Activated T-helper 1 cell treated with anti-CD3 and anti-CD28 coated beads, Interleukin-12 subunit alpha, Interleukin-12 subunit beta, Interleukin-2, Interleukin-4 antibody, amounts not matched to agents 30 ng/mL and 10 ng/mL and 1 ng/mL, durations not matched to agents 14 hours and 24 hours and 36 hours (primary cell): ENCODE measurements at regions of chr11 and their contacts with region 1.

Region 1: GRCh38 chr11:31798554-31799434 is 12.3 kb downstream of the PAX6 start:
- DNase-seq: no peak
- H3K4me3 Mint-ChIP-seq: no peak overlapping the region
- H3K27ac Mint-ChIP-seq: no peak overlapping the region
- H3K4me1 Mint-ChIP-seq: peaks cover 8% of the 10 kb centered on the region
- H3K27me3 Mint-ChIP-seq: peaks cover 70% of the 10 kb centered on the region

Region 2: DNA sequence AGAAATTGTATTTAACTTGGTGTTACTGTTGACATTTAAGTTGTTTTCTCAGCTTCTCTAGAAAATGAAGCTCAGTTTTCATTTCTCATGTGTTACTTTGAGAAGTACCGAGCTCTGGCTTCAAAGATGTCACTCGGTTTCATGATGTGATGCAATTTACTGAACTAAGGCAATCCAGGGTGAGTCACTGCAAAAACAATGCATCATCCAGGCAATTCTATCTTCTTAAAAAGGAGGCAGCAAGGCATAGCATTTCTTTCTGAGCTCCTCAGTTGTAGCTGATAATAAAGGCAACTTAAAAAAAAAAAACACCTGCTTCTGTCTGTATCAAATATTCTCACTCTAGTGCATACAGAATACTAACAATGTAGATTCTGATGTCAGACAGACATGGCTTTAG is 1690.9 kb before region 1 on chr11:
- intact Hi-C with region 1: no loop called
- DNase-seq: no peak
- H3K4me3 Mint-ChIP-seq: no peak overlapping the region
- H3K27ac Mint-ChIP-seq: no peak overlapping the region
- H3K4me1 Mint-ChIP-seq: no peaks in the 10 kb centered on the region
- H3K27me3 Mint-ChIP-seq: no peaks in the 10 kb centered on the region

Region 3: DNA sequence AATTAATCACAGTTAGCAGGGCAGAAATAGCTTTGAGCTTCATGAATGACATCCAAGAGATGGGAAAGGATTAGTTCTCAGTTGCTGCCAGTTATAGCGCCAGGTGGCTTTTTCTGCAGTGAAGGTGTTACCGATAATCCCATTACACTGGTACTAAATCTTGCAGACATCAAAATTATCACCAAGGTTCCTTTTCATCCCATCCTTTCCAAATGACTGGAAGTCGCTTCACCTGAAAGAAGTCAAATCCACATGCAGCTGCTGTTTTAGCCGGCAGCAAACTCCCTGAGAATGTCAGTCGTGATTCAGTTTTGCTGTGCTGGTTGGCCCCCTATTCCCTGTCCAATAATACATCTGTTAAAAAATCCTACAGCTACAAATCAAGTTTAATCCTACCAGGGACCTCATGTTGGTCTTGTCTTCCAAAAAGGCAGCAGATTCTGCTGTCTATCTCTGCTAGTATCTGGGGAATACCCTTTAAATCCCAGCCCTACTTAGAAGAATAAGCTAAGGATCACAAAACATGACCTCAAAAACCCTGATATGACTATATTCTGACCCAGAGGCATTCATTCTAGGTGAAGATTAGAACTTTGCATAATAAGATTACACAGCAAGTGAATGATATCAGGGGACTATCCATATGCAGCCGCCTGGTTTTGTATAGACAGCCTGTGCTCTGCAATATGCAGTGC is 321.1 kb before region 1 on chr11:
- intact Hi-C with region 1: loop called (anchors 10 kb)
- DNase-seq: no peak
- H3K4me3 Mint-ChIP-seq: no peak overlapping the region
- H3K27ac Mint-ChIP-seq: no peak overlapping the region
- H3K4me1 Mint-ChIP-seq: no peaks in the 10 kb centered on the region
- H3K27me3 Mint-ChIP-seq: no peaks in the 10 kb centered on the region

Region 4: GRCh38 chr11:31757260-31757835 is 41.4 kb before region 1 on chr11:
- intact Hi-C with region 1: no loop called
- DNase-seq: no peak
- H3K4me3 Mint-ChIP-seq: no peak overlapping the region
- H3K27ac Mint-ChIP-seq: no peak overlapping the region
- H3K4me1 Mint-ChIP-seq: no peaks in the 10 kb centered on the region
- H3K27me3 Mint-ChIP-seq: no peaks in the 10 kb centered on the region

Region 5: GRCh38 chr11:31817621-31818424 is 19.0 kb after region 1 on chr11:
- intact Hi-C with region 1: no loop called
- DNase-seq: no peak
- H3K4me3 Mint-ChIP-seq: no peak overlapping the region
- H3K27ac Mint-ChIP-seq: no peak overlapping the region
- H3K4me1 Mint-ChIP-seq: peaks cover 9% of the 10 kb centered on the region
- H3K27me3 Mint-ChIP-seq: peaks cover 77% of the 10 kb centered on the region